ENCODE measurements at regions of chr5 and their contacts with region 1.

Region 1: GRCh38 chr5:121870489-121870888 is 18.8 kb downstream of the FTMT start:
- DNase-seq: peak in 1 of 2 experiments; percentile 35
- H3K4me3 ChIP-seq: no peak overlapping the region
- H3K27ac ChIP-seq: no peak overlapping the region
- H3K4me1 ChIP-seq: 0 out of 2 replicates have a peak, but pooled peaks cover 4% of the 10 kb centered on the region
- H3K27me3 ChIP-seq: no peaks in the 10 kb centered on the region
- CTCF ChIP-seq: peak; percentile 58

Region 2: DNA sequence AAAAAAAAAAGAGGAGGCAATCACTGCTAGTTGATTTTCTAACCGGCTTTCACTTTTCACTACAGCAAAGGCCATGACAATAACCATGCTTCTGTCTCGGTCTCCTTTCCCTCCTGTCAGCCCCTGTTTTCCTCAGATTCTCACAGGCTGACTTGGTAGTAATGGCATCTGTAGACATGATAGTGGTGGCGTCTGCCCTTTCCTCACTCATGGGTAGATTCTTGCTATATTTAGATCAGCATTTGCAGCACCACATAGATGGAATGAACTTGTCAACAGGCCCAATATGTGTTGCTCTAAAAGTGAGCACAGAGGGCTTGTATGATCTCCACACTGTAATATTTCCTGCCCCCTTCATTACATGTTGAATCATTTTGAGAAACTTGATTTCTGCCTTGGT is 139.1 kb before region 1 on chr5:
- CTCF ChIA-PET with region 1: no interaction called
- POLR2A ChIA-PET with region 1: no interaction called
- intact Hi-C with region 1: loop called (anchors 10 kb)
- DNase-seq: no peak
- H3K4me3 ChIP-seq: no peak overlapping the region
- H3K27ac ChIP-seq: no peak overlapping the region
- H3K4me1 ChIP-seq: peaks cover 16% of the 10 kb centered on the region
- H3K27me3 ChIP-seq: no peaks in the 10 kb centered on the region
- CTCF ChIP-seq: no peak